ENCODE measurements at regions of chr14 and their contacts with region 1.

Region 1: DNA sequence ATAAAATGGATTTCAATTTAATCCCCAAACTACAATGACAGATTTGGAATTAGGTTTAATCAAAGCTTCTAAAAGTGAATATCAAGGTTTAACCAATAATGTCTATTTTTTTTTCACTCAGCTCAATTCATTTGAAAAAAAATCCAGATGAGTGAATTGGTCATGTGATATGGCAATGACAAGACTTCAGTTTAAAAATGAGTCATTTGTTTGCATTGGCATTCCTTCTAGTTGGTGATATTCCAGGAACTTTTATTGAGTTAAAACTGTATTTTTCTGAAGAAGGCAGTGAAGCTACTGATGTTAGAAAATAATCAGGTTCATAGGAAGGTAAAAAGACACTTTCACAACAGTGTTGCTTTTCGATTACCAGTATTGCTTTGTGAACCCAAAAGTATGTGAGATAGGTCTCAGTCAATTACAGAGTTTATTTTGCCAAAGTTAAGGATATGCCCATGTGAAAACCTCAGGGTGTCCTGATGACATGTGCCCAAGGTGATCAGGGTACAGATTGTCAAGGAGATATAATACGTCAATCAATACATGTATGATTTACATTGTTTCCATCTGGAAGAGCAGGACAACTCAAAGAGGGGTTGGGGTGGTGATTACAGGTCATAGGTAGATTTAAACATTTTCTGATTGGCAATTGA is 1214.9 kb downstream of the GALC start:
- DNase-seq: peak; percentile 49
- H3K4me3 ChIP-seq: no peak overlapping the region
- H3K27ac ChIP-seq: no peak overlapping the region
- H3K4me1 ChIP-seq: peaks cover 15% of the 10 kb centered on the region
- H3K27me3 ChIP-seq: no peaks in the 10 kb centered on the region
- CTCF ChIP-seq: no peak

Region 2: GRCh38 chr14:86462193-86462753 is 315.8 kb before region 1 on chr14:
- CTCF ChIA-PET with region 1: no interaction called
- dilution Hi-C with region 1: no loop called
- in situ Hi-C with region 1: no loop called
- intact Hi-C with region 1: loop called (anchors 5 kb)
- DNase-seq: peak; percentile 26
- H3K4me3 ChIP-seq: no peak overlapping the region
- H3K27ac ChIP-seq: no peak overlapping the region
- H3K4me1 ChIP-seq: no peaks in the 10 kb centered on the region
- H3K27me3 ChIP-seq: no peaks in the 10 kb centered on the region
- CTCF ChIP-seq: peak; percentile 21 to 62

Region 3: GRCh38 chr14:86799244-86799647 is 21.2 kb after region 1 on chr14:
- CTCF ChIA-PET with region 1: no interaction called
- dilution Hi-C with region 1: no loop called
- in situ Hi-C with region 1: no loop called
- intact Hi-C with region 1: loop called (anchors 2 kb)
- DNase-seq: peak; percentile 97
- H3K4me3 ChIP-seq: no peak overlapping the region
- H3K27ac ChIP-seq: peak overlapping the region; percentile 79
- H3K4me1 ChIP-seq: peaks cover 16% of the 10 kb centered on the region
- H3K27me3 ChIP-seq: no peaks in the 10 kb centered on the region
- CTCF ChIP-seq: peak; percentile 9 to 39